Right cardiac atrium (tissue), 5 donors: ENCODE measurements at regions of chr10 and their contacts with region 1.

Region 1: GRCh38 chr10:103966671-103967447 is at the start of gene SLK:
- DNase-seq: peak; percentile 88 to 95 (median 94)
- ATAC-seq: peak; percentile 96 to 98
- H3K4me3 ChIP-seq: peak within 1 kb of the TSS; percentile 93
- H3K27ac ChIP-seq: peak within 1 kb of the TSS; percentile 96
- H3K4me1 ChIP-seq: peaks cover 2% of the 10 kb centered on the region
- H3K27me3 ChIP-seq: no peaks in the 10 kb centered on the region
- total RNA-seq, gene SLK: 32.8 to 40.5 (median 36.4) TPM

Region 2: DNA sequence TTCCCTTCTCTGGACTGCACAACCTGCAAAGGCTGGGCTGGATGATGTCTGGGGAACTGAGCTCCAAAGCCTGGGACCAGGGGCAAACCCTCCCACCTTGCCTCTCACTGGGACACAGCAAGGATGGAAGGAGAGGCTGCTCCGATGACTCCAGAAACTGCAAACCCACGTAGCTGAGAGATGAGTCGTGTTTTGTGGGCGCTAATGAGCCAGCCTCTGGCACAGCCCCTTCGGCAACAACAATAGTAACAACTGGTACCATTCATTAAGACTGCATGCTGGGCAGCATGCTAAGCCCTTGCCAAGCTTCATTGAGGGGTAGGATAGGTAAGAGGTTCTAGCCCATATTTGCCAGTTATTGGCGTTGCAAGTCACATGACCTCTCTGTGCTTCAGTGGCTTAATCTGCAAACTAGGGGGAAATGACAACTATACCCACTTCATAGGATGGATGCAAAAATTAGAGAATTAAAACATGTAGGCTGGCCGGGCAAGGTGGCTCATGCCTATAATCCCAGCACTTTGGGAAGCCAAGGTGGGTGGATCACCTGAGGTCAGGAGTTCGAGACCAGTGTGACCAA is 257.4 kb before region 1 on chr10:
- intact Hi-C with region 1: no loop called
- DNase-seq: no peak
- ATAC-seq: no peak
- H3K4me3 ChIP-seq: no peak overlapping the region
- H3K27ac ChIP-seq: no peak overlapping the region
- H3K4me1 ChIP-seq: peaks cover 3% of the 10 kb centered on the region
- H3K27me3 ChIP-seq: no peaks in the 10 kb centered on the region

Region 3: GRCh38 chr10:103918053-103918846 is 48.6 kb before region 1 on chr10 and contains the start of gene STN1:
- intact Hi-C with region 1: loop called in 1 of 4 experiments (anchors 5 kb)
- DNase-seq: peak; percentile 99
- ATAC-seq: peak; percentile 98
- H3K4me3 ChIP-seq: peak within 1 kb of the TSS; percentile 79
- H3K27ac ChIP-seq: peak within 1 kb of the TSS; percentile 99
- H3K4me1 ChIP-seq: peaks cover 4% of the 10 kb centered on the region
- H3K27me3 ChIP-seq: no peaks in the 10 kb centered on the region
- total RNA-seq, gene STN1: 24.3 to 26.8 (median 25.1) TPM